Activated naive CD4-positive, alpha-beta T cell treated with anti-CD3 and anti-CD28 coated beads for 36 hours (primary cell): ENCODE measurements at regions of chr2 and their contacts with region 1.

Region 1: DNA sequence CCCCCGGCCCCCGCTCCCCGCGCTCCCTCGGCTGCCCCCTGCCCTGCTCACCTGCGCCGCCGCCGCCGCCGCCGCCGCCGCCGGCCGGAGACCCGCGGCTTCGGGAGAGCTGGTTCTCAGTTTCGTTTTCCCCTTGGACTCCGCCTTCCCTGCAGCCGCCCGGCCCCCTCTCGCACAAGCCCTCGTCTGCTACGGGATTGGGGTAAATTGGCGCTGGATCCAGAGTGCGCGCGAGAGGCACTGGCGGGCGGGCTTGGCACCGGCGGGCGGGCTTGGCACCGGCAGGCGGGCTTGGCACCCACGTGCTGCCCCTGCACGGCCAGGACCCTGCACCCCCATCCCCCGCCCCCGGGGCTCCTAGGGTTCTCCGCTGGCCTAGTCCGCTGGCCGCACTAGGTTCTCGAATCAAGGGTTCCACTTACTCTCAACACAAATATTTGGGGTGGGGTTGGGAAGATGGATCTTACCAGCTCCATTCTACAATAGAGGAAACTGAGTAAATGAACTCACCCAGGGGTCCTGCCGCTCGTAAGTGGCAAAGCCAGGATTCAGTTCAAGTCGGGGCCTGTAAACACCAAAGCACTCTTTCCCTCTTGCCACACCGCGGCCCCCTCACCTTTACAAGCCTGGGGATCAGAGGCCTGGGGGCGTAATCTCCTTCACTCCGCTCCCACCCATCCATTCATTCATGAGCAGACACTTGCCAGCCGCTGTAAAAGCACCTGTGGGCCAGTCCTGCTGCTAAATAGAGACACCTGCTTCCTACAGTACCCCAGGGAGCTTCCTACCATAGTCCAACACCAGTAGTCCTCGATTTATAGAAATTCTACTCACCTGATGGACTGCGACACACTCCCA is at the start of gene EIF2AK2:
- DNase-seq: peak; percentile 80
- H3K4me3 Mint-ChIP-seq: peak within 1 kb of the TSS; percentile 86
- H3K27ac Mint-ChIP-seq: peak within 1 kb of the TSS; percentile 85
- H3K4me1 Mint-ChIP-seq: peaks cover 30% of the 10 kb centered on the region
- H3K27me3 Mint-ChIP-seq: no peaks in the 10 kb centered on the region
- total RNA-seq, gene EIF2AK2: 54.5 to 55.7 TPM

Region 2: GRCh38 chr2:37083873-37084794 is 73.0 kb before region 1 on chr2 and contains the starts of genes GPATCH11 and HEATR5B:
- CTCF ChIA-PET with region 1: no interaction called
- intact Hi-C with region 1: loop called (anchors 1 kb)
- DNase-seq: peak; percentile 93
- H3K4me3 Mint-ChIP-seq: no peak within 1 kb of the TSS
- H3K27ac Mint-ChIP-seq: no peak within 1 kb of the TSS
- H3K4me1 Mint-ChIP-seq: peaks cover 26% of the 10 kb centered on the region
- H3K27me3 Mint-ChIP-seq: no peaks in the 10 kb centered on the region
- total RNA-seq, gene GPATCH11: 9.8 to 10.4 TPM
- total RNA-seq, gene HEATR5B: 15.5 to 15.8 TPM

Region 3: GRCh38 chr2:37306024-37306423 is 148.9 kb after region 1 on chr2:
- CTCF ChIA-PET with region 1: no interaction called
- intact Hi-C with region 1: no loop called
- DNase-seq: no peak
- H3K4me3 Mint-ChIP-seq: no peak overlapping the region
- H3K27ac Mint-ChIP-seq: no peak overlapping the region
- H3K4me1 Mint-ChIP-seq: peaks cover 38% of the 10 kb centered on the region
- H3K27me3 Mint-ChIP-seq: no peaks in the 10 kb centered on the region